CD4-positive, alpha-beta T cell (primary cell): ENCODE measurements at regions of chr6 and their contacts with region 1.

Region 1: GRCh38 chr6:154247119-154247861 is 109.3 kb downstream of the IPCEF1 start:
- DNase-seq: peak in 5 of 14 experiments; percentile 19 to 78 (median 63)
- ATAC-seq: peak; percentile 54
- H3K4me3 ChIP-seq: peak overlapping the region; percentile 72
- H3K4me3 Mint-ChIP-seq: peak overlapping the region; percentile 95
- H3K27ac ChIP-seq: peak overlapping the region; percentile 75 to 88
- H3K27ac Mint-ChIP-seq: peak overlapping the region; percentile 93
- H3K4me1 ChIP-seq: peaks cover 42% of the 10 kb centered on the region
- H3K4me1 Mint-ChIP-seq: peaks cover 94% of the 10 kb centered on the region
- H3K27me3 ChIP-seq: no peaks in the 10 kb centered on the region
- H3K27me3 Mint-ChIP-seq: no peaks in the 10 kb centered on the region
- CTCF ChIP-seq: no peak

Region 2: GRCh38 chr6:153966001-153966400 is 281.3 kb before region 1 on chr6:
- CTCF ChIA-PET with region 1: no interaction called
- POLR2A ChIA-PET with region 1: no interaction called
- intact Hi-C with region 1: no loop called
- DNase-seq: peak in 3 of 14 experiments; percentile 8 to 22 (median 20)
- ATAC-seq: no peak
- H3K4me3 ChIP-seq: no peak overlapping the region
- H3K4me3 Mint-ChIP-seq: peak overlapping the region; percentile 76
- H3K27ac ChIP-seq: no peak overlapping the region
- H3K27ac Mint-ChIP-seq: peak overlapping the region; percentile 27
- H3K4me1 ChIP-seq: no peaks in the 10 kb centered on the region
- H3K4me1 Mint-ChIP-seq: peaks cover 31% of the 10 kb centered on the region
- H3K27me3 ChIP-seq: no peaks in the 10 kb centered on the region
- H3K27me3 Mint-ChIP-seq: no peaks in the 10 kb centered on the region
- CTCF ChIP-seq: no peak

Region 3: DNA sequence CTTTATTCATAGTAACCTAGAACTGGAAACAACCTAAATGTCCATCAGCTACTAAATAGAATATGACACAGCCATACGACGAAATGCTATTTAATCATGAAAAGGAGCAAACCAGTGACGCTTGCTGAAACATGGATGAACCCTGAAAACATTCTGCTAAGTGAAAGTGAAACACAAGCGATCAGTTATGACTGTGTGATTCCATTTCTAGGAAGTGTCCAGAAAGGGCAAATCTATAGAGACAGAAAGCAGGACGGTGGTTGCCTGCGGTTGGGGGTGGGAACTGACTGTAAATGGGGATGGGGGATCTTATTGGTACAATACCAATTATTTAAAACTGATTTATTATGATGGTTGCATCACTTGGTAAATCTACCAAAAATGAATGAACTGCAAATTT is 17.5 kb before region 1 on chr6:
- CTCF ChIA-PET with region 1: interaction called, 10 read pairs
- POLR2A ChIA-PET with region 1: interaction called, 43 read pairs
- intact Hi-C with region 1: loop called (anchors 1 to 2 kb)
- DNase-seq: peak in 4 of 14 experiments; percentile 42 to 81 (median 65)
- ATAC-seq: peak; percentile 60
- H3K4me3 ChIP-seq: peak overlapping the region; percentile 39
- H3K4me3 Mint-ChIP-seq: peak overlapping the region; percentile 89
- H3K27ac ChIP-seq: peak overlapping the region in 1 of 2 donors; percentile 40
- H3K27ac Mint-ChIP-seq: peak overlapping the region; percentile 87
- H3K4me1 ChIP-seq: peaks cover 39% of the 10 kb centered on the region
- H3K4me1 Mint-ChIP-seq: peaks cover 82% of the 10 kb centered on the region
- H3K27me3 ChIP-seq: no peaks in the 10 kb centered on the region
- H3K27me3 Mint-ChIP-seq: no peaks in the 10 kb centered on the region
- CTCF ChIP-seq: no peak

Region 4: DNA sequence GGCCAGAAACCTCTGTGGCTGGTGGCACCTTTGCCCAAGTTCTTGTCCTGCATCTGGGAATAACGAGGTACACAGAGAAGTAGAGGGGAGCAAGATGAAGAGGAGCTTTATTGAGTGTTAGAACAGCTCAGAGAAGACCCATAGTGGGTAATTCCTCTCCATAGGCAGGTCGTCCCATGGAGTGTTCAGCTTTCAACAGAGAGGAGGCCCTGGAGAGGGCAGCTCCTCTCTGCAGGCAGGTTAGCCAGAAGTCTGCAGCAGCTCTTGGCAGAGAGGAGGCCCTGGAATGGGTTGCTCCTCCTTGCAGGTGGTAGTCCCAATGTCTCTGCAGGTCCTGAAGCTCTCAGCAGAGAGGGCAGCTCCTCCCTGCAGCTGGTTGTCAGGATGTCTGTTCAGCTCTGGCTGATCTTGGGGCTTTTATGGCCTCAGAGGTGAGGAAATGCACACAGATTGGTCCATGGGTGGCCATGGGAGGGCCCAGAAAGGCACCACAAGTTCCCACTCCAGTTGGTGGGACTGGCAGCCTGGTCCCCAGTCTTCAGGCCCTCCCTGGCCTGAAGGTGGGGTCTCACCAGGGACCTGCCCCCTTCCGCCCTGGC is 20.3 kb after region 1 on chr6:
- CTCF ChIA-PET with region 1: no interaction called
- POLR2A ChIA-PET with region 1: interaction called, 27 read pairs
- intact Hi-C with region 1: no loop called
- DNase-seq: peak in 2 of 14 experiments; percentile 27 to 36
- ATAC-seq: no peak
- H3K4me3 ChIP-seq: no peak overlapping the region
- H3K4me3 Mint-ChIP-seq: peak overlapping the region; percentile 54
- H3K27ac ChIP-seq: no peak overlapping the region
- H3K27ac Mint-ChIP-seq: no peak overlapping the region
- H3K4me1 ChIP-seq: peaks cover 16% of the 10 kb centered on the region
- H3K4me1 Mint-ChIP-seq: peaks cover 45% of the 10 kb centered on the region
- H3K27me3 ChIP-seq: no peaks in the 10 kb centered on the region
- H3K27me3 Mint-ChIP-seq: no peaks in the 10 kb centered on the region
- CTCF ChIP-seq: no peak